Right ventricle myocardium inferior (tissue), 1 donor: ENCODE measurements at regions of chr6 and their contacts with region 1.

Region 1: DNA sequence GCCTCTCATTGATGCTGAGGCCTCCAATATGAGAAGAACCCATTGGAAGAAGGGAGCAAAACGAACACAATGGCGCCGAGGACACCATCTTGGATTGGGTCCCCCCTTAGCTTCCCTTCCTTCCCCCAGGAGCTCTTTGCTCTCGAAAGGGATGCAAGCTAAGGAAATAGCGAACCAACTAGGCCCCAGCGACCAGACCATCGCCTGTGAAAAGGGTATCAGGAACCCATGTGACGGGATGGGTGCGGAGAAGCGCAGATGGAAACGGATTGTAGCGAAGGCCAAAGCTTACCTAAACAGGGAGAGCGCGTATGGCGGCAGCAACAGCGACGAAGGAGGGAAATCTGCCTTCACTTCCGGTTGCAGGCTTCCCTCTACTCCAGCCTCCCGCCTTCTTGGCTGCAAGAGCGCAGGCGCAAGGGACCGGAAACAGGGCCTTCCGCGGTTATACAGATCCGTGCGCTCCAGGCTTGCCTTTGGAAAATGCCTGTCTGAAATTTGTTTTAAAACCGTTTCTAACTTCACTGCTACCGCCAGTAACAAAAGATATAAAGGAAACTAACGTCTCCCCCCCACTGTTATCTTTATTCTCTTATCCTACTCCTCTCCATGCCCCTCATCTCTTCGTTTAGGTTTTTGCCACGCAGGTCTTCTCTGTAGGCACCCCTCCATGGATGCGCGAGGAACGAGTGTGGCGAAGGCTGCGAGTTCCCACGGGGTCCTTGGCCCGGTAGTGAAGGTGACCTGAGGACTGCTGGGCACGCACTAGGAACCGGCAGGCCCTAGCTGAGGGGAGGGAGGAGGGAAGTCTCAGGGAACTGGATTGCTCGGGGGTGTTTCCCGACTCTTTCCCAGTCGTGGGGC is at the start of gene DDX39B:
- DNase-seq: peak; percentile 98
- ATAC-seq: peak; percentile 94
- total RNA-seq, gene DDX39B: 159 TPM

Region 2: DNA sequence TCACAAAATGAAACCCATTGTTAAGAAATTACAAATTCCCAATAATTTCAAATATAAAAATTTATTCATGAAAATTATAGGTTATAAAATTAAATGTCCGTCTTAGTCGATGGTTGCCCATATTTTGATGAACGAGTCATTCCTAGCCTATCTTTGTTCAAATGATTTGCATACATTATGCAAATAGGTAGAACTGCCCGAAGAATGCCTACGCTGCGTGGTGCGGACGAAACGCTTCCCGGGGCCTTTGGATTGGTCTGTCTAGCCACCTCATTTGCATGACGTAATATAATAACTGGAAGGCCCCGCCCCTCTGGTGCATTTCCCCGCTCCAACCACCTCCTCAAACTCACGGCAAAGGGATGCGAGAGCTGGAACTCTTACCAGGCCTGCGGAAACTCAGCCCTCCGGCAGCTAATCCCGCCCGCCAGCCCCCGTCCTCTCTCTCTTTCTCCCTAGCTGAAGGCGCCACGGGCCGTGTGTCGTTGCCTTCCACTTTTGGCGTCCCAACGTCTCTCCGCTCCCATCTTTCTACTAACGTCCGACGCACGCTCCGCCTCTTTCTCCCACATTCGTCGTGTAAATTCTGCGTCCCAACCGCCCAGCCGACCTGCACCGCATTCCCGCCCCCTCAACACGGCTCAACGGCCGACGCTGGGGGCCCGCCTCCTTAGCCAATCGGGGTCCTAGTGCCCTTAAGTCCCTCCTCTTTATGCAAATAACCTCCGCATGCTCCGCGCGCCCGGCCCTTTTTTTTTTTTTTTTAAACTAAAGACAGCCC is 78.1 kb after region 1 on chr6:
- intact Hi-C with region 1: loop called (anchors 2 kb)
- DNase-seq: peak; percentile 99
- ATAC-seq: peak; percentile 95

Region 3: GRCh38 chr6:31639449-31639861 is 97.6 kb after region 1 on chr6:
- intact Hi-C with region 1: no loop called
- DNase-seq: no peak
- ATAC-seq: no peak

Region 4: DNA sequence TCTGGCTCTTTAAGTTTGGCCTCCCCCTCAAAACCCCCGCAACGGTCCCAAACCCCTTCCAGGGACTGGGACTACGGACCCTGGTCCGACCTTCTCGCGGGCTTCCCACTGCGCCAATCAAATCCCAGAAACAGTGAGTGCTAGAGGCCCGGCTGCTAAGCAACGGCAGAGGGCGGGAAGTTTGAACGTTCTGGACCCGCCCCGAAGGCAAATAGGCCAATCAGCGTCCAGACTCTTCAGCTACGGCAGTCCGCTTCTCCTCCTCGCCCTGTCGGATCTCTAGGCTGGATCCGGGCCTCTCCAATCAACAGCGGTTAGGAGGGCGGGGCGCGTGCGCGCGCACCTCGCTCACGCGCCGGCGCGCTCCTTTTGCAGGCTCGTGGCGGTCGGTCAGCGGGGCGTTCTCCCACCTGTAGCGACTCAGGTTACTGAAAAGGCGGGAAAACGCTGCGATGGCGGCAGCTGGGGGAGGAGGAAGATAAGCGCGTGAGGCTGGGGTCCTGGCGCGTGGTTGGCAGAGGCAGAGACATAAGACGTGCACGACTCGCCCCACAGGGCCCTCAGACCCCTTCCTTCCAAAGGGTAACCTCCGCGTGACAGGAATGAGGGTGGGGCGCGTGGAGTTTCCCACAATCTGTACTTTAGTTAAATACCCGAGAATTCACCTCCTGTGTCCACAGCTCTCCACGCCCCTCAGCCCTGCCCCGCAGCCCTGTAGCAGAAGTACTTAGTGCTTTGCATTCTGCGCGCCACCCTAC is 197.9 kb after region 1 on chr6 and contains the start of gene MSH5:
- intact Hi-C with region 1: loop called (anchors 10 kb)
- DNase-seq: peak; percentile 98
- ATAC-seq: peak; percentile 95
- total RNA-seq, gene MSH5: 2.0 TPM

Region 5: DNA sequence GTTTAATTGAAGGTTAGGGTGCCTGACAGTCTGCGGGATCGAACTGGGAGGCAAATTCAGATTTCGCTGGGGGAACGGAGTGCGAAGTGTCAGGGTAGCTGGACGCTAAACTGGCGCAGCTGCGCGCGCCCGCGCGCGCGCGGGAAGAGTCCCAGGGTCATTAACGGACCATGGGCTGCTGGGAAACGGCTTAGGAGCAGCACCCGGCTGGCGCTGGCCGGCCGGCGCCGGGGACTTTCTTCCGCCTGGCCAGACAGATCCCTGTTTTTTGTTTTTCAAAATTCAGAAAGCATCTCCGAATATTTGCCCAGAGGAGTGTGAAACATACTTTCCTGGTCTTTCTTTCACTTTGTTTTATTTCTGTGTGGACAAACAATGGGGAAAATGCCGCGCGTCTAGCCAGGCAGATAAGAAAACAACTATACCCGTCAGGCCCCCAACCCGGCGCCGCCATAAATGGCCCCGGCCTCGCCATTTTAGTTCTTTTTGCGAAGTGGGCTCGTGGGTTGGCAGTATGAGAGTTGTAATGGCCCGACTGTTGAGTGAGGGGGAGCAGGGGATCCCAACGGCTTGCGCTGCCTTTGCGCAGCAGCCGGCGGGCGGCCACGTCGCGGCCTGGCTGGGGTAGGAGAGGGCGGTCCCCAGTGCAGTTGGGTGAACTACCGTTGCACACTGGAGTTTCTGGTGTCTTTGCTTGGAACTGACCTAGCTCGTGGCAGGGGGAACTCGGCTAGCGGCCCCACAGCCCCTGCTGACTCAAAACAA is 292.7 kb after region 1 on chr6:
- intact Hi-C with region 1: loop called (anchors 10 kb)
- DNase-seq: peak; percentile 94
- ATAC-seq: peak; percentile 92

Region 6: GRCh38 chr6:31958741-31959739 is 417.1 kb after region 1 on chr6 and contains the starts of genes NELFE and SKIC2:
- intact Hi-C with region 1: loop called (anchors 10 kb)
- DNase-seq: peak; percentile 98
- ATAC-seq: peak; percentile 99
- total RNA-seq, gene NELFE: 41.9 TPM
- total RNA-seq, gene SKIC2: 30.7 TPM